Motor neuron (in vitro differentiated cells): ENCODE measurements at regions of chr14 and their contacts with region 1.

Region 1: GRCh38 chr14:70821584-70822529 is 12.5 kb upstream of the MAP3K9 start:
- ATAC-seq: peak; percentile 54 to 79 (median 74)
- H3K4me3 ChIP-seq: peak overlapping the region; percentile 50 to 59 (median 53)
- H3K27ac ChIP-seq: no peak overlapping the region
- H3K4me1 ChIP-seq: peaks cover 0 to 5% of the 10 kb centered on the region in 2 donors

Region 2: GRCh38 chr14:70538087-70538486 is 283.8 kb before region 1 on chr14:
- in situ Hi-C with region 1: no loop called
- ATAC-seq: peak in 1 of 8 experiments; percentile 84
- H3K4me3 ChIP-seq: no peak overlapping the region
- H3K27ac ChIP-seq: no peak overlapping the region
- H3K4me1 ChIP-seq: no peaks in the 10 kb centered on the region

Region 3: DNA sequence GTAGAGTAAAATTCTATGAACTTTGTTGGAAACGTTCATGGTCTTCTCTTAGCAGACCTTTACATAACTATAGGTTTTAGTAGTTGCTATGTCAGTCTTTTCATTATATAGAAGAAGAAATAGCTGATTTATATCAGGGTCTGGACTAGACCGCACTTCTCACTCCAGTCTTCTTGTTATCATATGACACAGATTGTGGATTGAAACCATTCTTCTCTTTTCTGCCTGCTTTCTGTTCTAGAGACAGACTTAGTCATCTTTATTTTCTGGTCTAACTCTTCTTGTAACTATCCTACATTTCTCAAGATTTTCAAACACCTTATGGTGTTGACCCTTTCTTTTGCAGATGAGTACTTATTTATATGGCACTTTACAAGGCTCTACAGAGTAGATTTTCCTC is 141.1 kb after region 1 on chr14:
- in situ Hi-C with region 1: loop called in 2 of 9 experiments (anchors 10 to 25 kb)
- ATAC-seq: no peak
- H3K4me3 ChIP-seq: no peak overlapping the region
- H3K27ac ChIP-seq: no peak overlapping the region
- H3K4me1 ChIP-seq: no peaks in the 10 kb centered on the region